ENCODE measurements at regions of chr9 and their contacts with region 1.

Region 1: GRCh38 chr9:133619791-133620190 is 10.6 kb upstream of the FAM163B start:
- DNase-seq: no peak
- H3K4me3 ChIP-seq: no peak overlapping the region
- CTCF ChIP-seq: no peak
- POLR2A ChIP-seq: no peak

Region 2: DNA sequence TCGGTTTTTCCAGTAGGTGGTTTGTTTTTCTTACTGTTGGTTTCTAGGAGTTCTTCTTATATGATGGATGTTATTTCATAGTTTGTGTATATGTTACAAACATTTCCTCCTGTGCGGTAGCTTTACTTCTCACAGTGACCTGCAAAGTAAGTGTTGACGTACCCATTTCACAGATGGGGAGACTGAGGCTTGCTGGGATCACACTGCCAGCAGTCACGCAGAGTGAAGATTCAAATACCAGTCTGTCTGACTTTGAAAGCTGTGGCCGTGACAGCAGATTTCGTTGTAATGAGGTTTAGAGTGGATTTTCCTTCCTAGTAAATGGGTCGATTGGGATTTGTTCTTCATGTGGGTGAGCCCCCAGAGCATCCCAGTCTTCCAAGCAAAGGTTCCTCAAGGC is 29.4 kb after region 1 on chr9:
- intact Hi-C with region 1: loop called (anchors 1 kb)
- DNase-seq: no peak
- H3K4me3 ChIP-seq: no peak overlapping the region
- CTCF ChIP-seq: no peak
- POLR2A ChIP-seq: no peak